Sciatic nerve (tissue), 2 donors: ENCODE measurements at regions of chr6 and their contacts with region 1.

Region 1: DNA sequence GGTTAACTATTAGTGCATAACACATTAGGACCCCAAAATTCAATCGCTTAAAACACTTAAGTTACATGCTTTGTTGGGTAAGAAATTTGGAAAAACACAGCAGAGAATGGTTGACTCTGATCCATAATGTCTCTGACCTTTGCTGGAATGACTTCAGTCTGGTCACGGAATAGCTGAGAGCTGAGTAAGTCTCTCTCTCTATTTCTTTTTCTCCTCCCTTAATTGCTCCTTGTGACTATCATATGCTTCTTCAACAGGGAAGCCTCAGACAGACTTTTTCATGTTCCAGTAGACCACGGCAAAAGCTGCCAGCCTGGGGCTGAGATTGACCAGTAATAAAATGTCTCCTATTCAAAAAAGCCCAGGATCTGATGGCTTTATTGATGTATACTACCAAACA is 4.8 kb downstream of the OR12D1 start:
- DNase-seq: no peak
- ATAC-seq: no peak

Region 2: DNA sequence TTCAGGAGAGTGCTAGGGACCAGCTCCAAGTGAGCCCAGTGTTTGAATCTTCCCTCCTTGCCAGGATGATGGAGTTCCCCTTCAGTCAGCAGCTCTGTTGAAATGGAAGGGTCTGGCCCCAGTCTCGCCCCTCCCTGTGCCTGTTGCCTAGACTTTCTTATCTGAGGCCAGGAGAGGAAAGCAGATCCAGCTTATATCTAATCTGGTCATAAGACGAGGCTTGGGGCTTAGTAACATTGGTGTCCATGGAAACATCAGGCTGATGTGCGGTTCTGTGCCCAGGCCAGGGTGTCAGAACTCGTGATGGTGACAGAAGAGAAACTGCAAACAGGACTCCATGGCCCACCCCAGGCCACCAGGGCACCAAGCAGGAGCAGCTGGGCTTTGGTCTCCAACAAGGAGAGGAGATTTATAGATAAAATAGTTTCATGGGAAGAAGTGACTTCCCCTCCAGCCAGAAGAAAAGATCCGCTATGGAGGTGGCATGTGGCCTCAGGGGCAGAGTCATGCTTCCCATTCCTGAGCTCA is 58.5 kb after region 1 on chr6:
- intact Hi-C with region 1: loop called (anchors 2 kb)
- DNase-seq: no peak
- ATAC-seq: no peak